Activated CD4-positive, alpha-beta T cell treated with anti-CD3 and anti-CD28 coated beads for 36 hours (primary cell): ENCODE measurements at regions of chr12 and their contacts with region 1.

Region 1: DNA sequence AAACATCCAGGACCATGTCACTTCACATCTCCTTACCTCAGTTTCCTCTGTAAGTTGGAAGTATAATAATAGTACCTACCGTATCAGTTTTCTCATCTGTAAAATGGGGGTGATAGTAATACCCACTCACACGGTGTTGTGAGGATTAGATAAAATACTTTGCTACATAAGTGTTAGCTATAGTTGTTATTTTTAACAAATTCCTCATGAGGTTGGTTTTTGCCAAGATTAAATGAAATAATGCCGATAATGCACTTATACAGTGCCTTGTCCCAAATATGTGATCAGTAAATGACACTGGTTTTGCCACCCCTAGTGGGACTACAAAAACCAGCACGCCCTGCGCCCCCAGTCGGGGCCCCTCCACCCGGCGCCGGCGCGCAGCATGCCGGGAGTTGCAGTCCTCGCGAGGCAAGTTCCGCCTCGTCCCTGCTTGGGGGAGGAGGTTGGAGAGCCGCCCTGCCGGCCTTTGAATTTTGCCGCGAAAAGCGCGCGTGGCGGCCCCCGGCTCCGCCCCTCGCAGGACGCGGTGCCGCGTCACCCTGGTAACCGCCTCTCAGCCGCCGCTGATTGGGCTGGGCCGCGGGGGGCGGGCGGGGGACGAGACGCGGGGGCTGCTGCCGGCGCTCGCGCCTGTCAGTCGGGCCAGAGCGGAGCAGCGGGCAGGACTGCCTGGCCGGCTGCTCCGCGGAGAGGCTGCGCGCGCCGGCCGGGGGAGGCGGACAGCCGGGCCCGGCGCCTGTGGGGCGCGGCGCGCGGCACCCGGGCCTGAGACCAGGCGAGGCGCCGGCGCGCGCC is at the start of gene FAM222A:
- DNase-seq: peak; percentile 97
- ATAC-seq: peak; percentile 95
- H3K4me3 Mint-ChIP-seq: peak within 1 kb of the TSS; percentile 56
- H3K27ac Mint-ChIP-seq: no peak within 1 kb of the TSS
- H3K4me1 Mint-ChIP-seq: peaks cover 4% of the 10 kb centered on the region
- H3K27me3 Mint-ChIP-seq: peaks cover 25% of the 10 kb centered on the region
- total RNA-seq, gene FAM222A: 0.39 to 0.53 TPM

Region 2: DNA sequence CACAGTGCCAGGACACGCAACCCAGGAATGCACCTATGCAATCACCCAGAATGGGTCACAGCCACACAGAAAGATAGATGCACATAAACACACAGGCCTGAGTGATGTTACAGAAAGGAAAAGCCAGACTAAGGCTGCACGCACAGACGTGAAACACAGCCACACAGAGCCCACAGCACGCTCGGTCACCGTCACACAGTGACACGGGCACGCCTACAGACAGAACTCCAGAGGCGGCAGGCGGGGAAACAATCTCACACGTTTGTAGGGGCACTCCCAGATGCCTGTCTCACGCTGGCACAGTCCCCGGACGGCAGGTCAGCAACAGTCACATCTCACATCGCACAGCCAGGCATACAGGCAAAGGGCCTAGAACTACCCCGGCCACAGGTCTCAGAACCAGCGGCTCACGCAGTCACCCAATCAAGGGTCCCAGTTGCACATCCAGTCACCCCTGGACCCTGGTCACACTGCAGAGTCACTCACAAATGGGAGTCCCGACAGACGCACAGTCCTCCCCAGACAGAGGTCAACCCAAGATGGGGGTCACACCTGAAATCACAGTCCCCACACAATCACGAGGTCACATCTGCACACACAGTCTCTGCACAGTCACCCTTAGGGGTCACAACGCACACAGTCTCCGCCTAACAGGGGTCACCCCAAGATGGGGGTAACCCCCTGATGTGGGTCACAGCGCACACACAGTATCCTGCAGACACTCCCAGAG is 856.8 kb before region 1 on chr12:
- CTCF ChIA-PET with region 1: interaction called, 3 read pairs
- POLR2A ChIA-PET with region 1: no interaction called
- intact Hi-C with region 1: loop called in 1 of 2 experiments (anchors 5 kb)
- DNase-seq: peak; percentile 81
- ATAC-seq: peak; percentile 64
- H3K4me3 Mint-ChIP-seq: peak overlapping the region; percentile 82
- H3K27ac Mint-ChIP-seq: peak overlapping the region; percentile 86
- H3K4me1 Mint-ChIP-seq: peaks cover 43% of the 10 kb centered on the region
- H3K27me3 Mint-ChIP-seq: peaks cover 2% of the 10 kb centered on the region

Region 3: DNA sequence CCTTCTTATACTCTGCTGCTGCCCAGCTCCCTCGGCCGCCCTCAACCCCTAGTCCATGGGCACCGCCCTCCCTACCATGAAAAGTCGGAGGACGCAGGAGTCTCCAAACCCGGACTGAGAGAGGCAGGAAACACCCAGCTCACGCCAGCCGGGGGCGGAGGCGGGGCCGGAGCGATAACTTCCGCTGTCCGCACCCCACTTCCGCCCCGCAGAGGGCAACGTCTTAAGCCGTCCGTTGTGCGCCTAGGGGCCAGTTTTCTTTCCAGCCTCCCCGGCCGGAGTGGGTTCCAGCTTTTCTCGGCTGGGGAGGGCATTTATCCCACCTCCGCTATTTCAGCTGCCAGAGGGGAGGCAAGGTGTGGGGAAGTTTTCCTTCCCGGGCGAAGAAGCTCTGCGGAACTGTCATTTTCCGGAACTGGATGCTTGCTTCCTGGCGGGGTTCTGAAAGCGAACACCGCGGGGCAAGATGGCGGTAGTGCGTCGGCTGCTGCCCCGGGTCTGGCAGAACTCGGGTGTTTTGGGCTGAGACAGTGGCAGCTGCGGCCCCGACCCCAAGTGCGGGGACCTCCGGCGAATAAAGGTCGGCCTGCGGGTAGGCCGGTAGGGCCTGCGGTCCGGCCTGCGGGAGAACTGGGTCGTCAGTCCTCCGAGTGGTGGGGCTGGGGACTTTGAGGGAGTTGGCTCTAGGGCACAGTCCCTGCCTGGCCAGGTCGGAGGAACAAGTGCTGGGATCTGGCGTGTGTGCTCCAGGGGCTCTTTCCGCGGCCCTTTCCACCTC is 236.0 kb before region 1 on chr12 and contains the starts of genes KCTD10 and UBE3B:
- CTCF ChIA-PET with region 1: no interaction called
- POLR2A ChIA-PET with region 1: no interaction called
- intact Hi-C with region 1: loop called in 1 of 2 experiments (anchors 1 kb)
- DNase-seq: peak; percentile 92
- ATAC-seq: peak; percentile 97
- H3K4me3 Mint-ChIP-seq: peak within 1 kb of the TSS; percentile 95
- H3K27ac Mint-ChIP-seq: peak within 1 kb of the TSS; percentile 99
- H3K4me1 Mint-ChIP-seq: peaks cover 43% of the 10 kb centered on the region
- H3K27me3 Mint-ChIP-seq: no peaks in the 10 kb centered on the region
- total RNA-seq, gene KCTD10: 42.0 to 46.3 TPM
- total RNA-seq, gene UBE3B: 25.7 to 27.2 TPM

Region 4: DNA sequence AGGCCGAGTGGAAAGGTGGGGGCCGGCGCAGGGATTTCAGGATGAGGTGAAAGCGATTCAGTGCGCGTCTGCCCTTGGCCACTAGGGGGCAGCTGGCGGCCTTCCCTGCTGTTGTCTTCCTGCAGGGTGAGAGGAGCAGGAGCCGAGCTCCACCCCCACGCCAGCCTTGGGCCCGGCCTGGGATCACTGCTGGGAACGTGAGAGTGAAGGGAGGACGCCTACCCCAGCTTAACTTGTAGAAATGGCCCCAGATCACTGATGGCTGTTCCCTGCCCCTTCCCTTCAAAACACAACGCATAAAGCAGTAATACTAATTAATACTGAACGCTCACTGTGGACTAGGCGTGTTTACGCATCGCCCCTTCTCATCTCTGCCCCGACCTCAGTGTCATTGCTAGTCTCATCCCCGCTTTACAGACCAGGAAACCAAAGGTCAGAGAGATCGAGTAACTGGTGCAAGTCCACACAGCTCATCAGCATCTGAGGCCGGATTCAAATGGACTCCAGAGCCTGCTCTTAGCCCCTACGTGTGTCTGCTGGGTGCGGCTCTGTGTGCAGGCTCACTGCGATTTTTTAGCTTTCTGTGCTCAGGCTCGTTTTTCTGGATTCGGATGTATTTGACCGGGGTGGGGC is 115.5 kb before region 1 on chr12:
- CTCF ChIA-PET with region 1: interaction called, 5 read pairs
- POLR2A ChIA-PET with region 1: no interaction called
- intact Hi-C with region 1: loop called (anchors 2 to 5 kb)
- DNase-seq: peak; percentile 80
- ATAC-seq: peak; percentile 51
- H3K4me3 Mint-ChIP-seq: no peak overlapping the region
- H3K27ac Mint-ChIP-seq: no peak overlapping the region
- H3K4me1 Mint-ChIP-seq: peaks cover 31% of the 10 kb centered on the region
- H3K27me3 Mint-ChIP-seq: no peaks in the 10 kb centered on the region

Region 5: GRCh38 chr12:109695961-109696461 is 17.4 kb before region 1 on chr12:
- CTCF ChIA-PET with region 1: no interaction called
- POLR2A ChIA-PET with region 1: no interaction called
- intact Hi-C with region 1: no loop called
- DNase-seq: no peak
- ATAC-seq: no peak
- H3K4me3 Mint-ChIP-seq: no peak overlapping the region
- H3K27ac Mint-ChIP-seq: no peak overlapping the region
- H3K4me1 Mint-ChIP-seq: no peaks in the 10 kb centered on the region
- H3K27me3 Mint-ChIP-seq: peaks cover 11% of the 10 kb centered on the region

Region 6: GRCh38 chr12:109744986-109745942 is 31.9 kb after region 1 on chr12:
- CTCF ChIA-PET with region 1: no interaction called
- POLR2A ChIA-PET with region 1: no interaction called
- intact Hi-C with region 1: no loop called
- DNase-seq: peak; percentile 1
- ATAC-seq: no peak
- H3K4me3 Mint-ChIP-seq: no peak overlapping the region
- H3K27ac Mint-ChIP-seq: no peak overlapping the region
- H3K4me1 Mint-ChIP-seq: no peaks in the 10 kb centered on the region
- H3K27me3 Mint-ChIP-seq: peaks cover 3% of the 10 kb centered on the region

Region 7: GRCh38 chr12:110048242-110049027 is 335.0 kb after region 1 on chr12 and contains the start of gene C12orf76:
- CTCF ChIA-PET with region 1: no interaction called
- POLR2A ChIA-PET with region 1: no interaction called
- intact Hi-C with region 1: loop called in 1 of 2 experiments (anchors 1 kb)
- DNase-seq: peak; percentile 95
- ATAC-seq: peak; percentile 100
- H3K4me3 Mint-ChIP-seq: peak within 1 kb of the TSS; percentile 78
- H3K27ac Mint-ChIP-seq: peak within 1 kb of the TSS; percentile 94
- H3K4me1 Mint-ChIP-seq: peaks cover 28% of the 10 kb centered on the region
- H3K27me3 Mint-ChIP-seq: no peaks in the 10 kb centered on the region
- total RNA-seq, gene C12orf76: 10.2 to 10.5 TPM

Region 8: DNA sequence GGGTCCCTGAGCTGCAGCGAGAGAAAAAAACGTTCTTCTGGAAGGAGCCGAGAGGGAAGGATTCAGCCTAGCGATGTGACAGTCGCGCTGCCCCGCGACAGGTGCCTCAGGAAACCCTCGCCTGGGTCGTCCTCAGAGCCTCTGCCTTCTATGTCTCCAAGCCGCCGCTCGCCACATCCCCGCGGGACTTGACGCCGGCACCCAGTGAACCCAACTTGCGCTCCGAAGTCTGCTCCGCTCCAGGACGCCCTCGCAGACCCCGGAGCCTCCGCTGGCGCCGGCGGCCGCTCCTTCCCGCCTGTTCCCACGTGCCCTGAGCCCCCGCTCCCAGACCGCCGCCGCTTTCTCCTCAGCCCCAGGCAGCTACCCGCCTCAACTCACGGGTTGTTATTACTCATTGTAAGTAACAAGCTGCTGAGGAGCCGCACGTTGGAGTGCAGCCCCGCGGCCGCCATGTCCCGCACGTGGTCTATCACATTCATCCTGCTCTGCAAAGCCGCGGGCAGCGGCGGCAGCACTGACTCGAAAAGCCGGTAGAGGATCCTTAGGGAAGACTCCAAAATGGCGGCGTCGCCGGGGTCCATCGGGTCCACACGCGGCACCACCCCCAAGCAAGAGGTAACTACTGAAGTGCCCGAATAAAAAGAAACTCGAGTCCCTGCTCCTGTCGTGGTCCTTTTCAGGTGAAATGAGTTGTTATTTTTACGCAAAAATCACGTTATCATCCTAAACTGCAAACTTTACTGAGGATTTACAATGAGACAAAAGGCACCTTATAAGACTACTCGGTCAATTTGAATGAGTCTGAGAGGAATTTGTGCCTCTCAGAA is 690.0 kb after region 1 on chr12 and contains the start of gene ANAPC7:
- CTCF ChIA-PET with region 1: no interaction called
- POLR2A ChIA-PET with region 1: no interaction called
- intact Hi-C with region 1: loop called in 1 of 2 experiments (anchors 5 kb)
- DNase-seq: peak; percentile 93
- ATAC-seq: peak; percentile 94
- H3K4me3 Mint-ChIP-seq: peak within 1 kb of the TSS; percentile 88
- H3K27ac Mint-ChIP-seq: peak within 1 kb of the TSS; percentile 99
- H3K4me1 Mint-ChIP-seq: peaks cover 21% of the 10 kb centered on the region
- H3K27me3 Mint-ChIP-seq: no peaks in the 10 kb centered on the region
- total RNA-seq, gene ANAPC7: 52.6 to 63.6 TPM